RWPE1 (cell line): ENCODE measurements at regions of chr9 and their contacts with region 1.

Region 1: GRCh38 chr9:131382850-131383729 is 10.8 kb upstream of the PRRC2B start:
- DNase-seq: peak; percentile 92
- H3K27ac ChIP-seq: peak overlapping the region; percentile 70
- CTCF ChIP-seq: no peak

Region 2: GRCh38 chr9:131237931-131238401 is 145.1 kb before region 1 on chr9:
- CTCF ChIA-PET with region 1: no interaction called
- POLR2A ChIA-PET with region 1: no interaction called
- DNase-seq: peak; percentile 54
- H3K27ac ChIP-seq: no peak overlapping the region; the same call in 1 of the 2 replicates
- CTCF ChIP-seq: no peak

Region 3: GRCh38 chr9:131366761-131367401 is 16.2 kb before region 1 on chr9:
- CTCF ChIA-PET with region 1: no interaction called
- POLR2A ChIA-PET with region 1: interaction called, 14 read pairs
- DNase-seq: peak; percentile 83
- H3K27ac ChIP-seq: peak overlapping the region; percentile 73
- CTCF ChIP-seq: peak; percentile 65